ENCODE measurements at regions of chr7 and their contacts with region 1.

Region 1: DNA sequence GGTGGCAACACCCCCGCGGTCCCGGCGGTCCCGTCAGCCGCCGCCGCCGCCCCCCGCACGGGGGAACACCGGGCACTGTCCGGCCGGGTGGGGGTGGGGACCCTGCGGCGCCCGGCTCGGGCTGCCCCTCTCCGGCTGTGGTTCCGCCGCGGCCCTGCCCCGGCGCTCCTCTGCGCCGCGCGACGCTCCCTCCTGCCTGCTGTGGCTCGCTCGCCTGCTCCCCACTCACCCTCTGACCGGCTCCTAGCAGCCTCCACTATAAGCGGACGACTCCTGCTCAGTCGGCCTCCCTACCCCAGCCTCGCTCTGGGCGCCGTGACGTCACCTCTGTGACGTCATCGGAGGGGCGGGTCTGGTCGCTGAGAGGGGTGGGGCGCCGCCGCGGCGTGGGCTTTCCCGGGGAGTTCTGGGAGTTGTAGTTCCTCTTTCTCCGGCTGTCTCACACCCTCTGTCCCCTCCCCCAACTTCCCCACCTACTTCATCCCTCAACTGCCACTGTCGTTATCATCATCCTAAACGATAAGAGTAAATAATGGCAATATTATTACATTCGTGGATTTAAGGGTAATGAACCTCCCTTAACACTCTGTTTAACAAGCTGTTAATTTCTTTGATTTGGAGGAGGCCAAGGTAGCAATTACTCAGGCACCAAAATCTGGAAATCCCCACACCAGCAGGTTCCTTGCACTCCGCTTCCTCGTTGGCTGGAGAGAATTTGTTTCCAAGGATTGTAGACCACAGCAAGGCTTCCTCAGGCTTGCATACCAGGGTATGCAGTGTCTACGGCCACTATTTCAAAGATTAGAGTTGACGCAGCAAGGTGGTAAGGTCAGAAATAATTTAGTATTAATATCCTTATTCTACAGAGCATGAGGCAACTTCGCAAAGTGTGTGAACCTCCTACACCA is at the start of gene UBE2H:
- DNase-seq: peak; percentile 92
- H3K4me3 Mint-ChIP-seq: no peak within 1 kb of the TSS
- H3K27ac Mint-ChIP-seq: no peak within 1 kb of the TSS
- H3K4me1 Mint-ChIP-seq: peaks cover 9% of the 10 kb centered on the region
- H3K27me3 Mint-ChIP-seq: no peaks in the 10 kb centered on the region
- CTCF ChIP-seq: no peak
- total RNA-seq, gene UBE2H: 128 and 130 TPM in 2 replicates

Region 2: DNA sequence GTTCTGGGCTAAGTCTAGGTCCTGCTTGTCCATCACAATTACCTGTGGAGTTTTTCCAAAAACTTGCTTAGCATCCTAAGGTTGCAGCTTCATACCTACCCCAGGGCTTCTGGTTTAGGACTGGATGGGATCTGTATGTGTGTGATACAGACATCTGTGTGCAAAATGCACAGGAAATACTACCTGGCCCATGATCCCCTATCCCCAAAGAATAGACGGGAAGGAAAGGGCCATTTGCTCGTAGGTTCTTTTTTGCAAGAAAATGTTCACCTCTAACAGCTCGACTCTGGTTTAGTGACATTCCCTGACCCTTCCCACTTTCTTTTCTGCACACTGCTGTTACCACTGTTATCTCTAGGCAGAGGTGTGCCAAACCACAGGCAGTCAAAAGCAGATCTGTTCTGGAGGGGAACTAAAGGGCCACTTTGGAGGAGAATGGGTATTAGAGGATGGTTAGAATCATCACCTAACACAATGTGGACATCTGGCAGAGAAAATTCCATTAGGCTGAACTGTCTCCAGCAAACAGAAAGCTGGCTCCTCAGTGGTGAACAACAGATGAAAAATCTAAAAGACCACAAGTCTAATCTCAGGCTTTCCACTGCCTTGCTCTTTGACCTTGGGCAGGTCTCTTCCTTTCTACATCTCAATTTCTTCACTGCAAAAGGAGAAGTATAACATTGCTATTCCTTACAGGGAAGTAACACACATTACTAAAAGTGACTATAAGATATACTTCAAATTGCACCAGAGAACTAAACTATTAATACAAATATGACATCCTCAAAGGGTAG is 107.5 kb before region 1 on chr7:
- CTCF ChIA-PET with region 1: interaction called, 4 read pairs
- POLR2A ChIA-PET with region 1: interaction called, 21 read pairs
- intact Hi-C with region 1: loop called (anchors 5 kb)
- DNase-seq: no peak
- H3K4me3 Mint-ChIP-seq: no peak overlapping the region
- H3K27ac Mint-ChIP-seq: peak overlapping the region; percentile 95
- H3K4me1 Mint-ChIP-seq: peaks cover 47% of the 10 kb centered on the region
- H3K27me3 Mint-ChIP-seq: no peaks in the 10 kb centered on the region
- CTCF ChIP-seq: no peak

Region 3: DNA sequence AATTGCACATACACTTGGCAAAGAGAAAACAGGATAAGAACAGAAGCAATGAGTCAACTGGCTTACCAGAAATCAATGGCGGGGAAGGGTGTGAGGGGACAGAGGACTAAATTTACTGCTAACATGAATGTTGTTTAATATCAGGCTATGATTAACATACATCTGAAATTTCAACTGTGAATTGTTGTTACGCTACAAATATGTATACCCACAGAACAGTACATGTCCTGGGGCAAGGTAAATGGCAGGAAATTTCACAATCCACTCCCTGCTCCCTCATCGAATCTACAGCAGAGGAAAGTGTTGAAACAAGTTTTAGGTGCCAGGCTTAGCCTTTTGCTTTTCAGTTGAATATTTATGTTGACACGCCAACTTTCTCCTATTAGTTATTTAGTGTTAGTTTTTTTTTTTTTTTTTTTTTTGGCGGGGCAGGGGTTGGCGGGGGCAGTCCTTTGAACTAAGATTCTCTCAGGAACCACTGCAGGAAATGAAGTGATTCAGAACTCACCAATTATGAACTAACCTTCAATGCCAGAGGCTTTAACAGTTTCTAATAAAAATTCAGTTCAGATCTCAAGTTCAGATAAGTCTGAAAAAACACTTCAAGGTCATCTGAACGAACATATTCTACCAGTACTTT is 99.1 kb before region 1 on chr7:
- CTCF ChIA-PET with region 1: interaction called, 4 read pairs
- POLR2A ChIA-PET with region 1: interaction called, 39 read pairs
- intact Hi-C with region 1: loop called (anchors 5 kb)
- DNase-seq: peak; percentile 97
- H3K4me3 Mint-ChIP-seq: peak overlapping the region; percentile 54
- H3K27ac Mint-ChIP-seq: peak overlapping the region; percentile 92
- H3K4me1 Mint-ChIP-seq: peaks cover 52% of the 10 kb centered on the region
- H3K27me3 Mint-ChIP-seq: no peaks in the 10 kb centered on the region
- CTCF ChIP-seq: no peak

Region 4: GRCh38 chr7:129864042-129864441 is 88.9 kb before region 1 on chr7:
- CTCF ChIA-PET with region 1: no interaction called
- POLR2A ChIA-PET with region 1: interaction called, 10 read pairs
- intact Hi-C with region 1: no loop called
- DNase-seq: peak; percentile 76
- H3K4me3 Mint-ChIP-seq: no peak overlapping the region
- H3K27ac Mint-ChIP-seq: peak overlapping the region; percentile 82
- H3K4me1 Mint-ChIP-seq: peaks cover 21% of the 10 kb centered on the region
- H3K27me3 Mint-ChIP-seq: no peaks in the 10 kb centered on the region
- CTCF ChIP-seq: no peak

Region 5: GRCh38 chr7:129875745-129876411 is 77.0 kb before region 1 on chr7:
- CTCF ChIA-PET with region 1: interaction called, 5 read pairs
- POLR2A ChIA-PET with region 1: interaction called, 124 read pairs
- intact Hi-C with region 1: no loop called
- DNase-seq: peak; percentile 69
- H3K4me3 Mint-ChIP-seq: peak overlapping the region; percentile 69
- H3K27ac Mint-ChIP-seq: peak overlapping the region; percentile 90
- H3K4me1 Mint-ChIP-seq: peaks cover 35% of the 10 kb centered on the region
- H3K27me3 Mint-ChIP-seq: no peaks in the 10 kb centered on the region
- CTCF ChIP-seq: no peak

Region 6: GRCh38 chr7:129969807-129970446 is 17.0 kb after region 1 on chr7:
- CTCF ChIA-PET with region 1: interaction called, 6 read pairs
- POLR2A ChIA-PET with region 1: interaction called, 177 read pairs
- intact Hi-C with region 1: no loop called
- DNase-seq: peak; percentile 91
- H3K4me3 Mint-ChIP-seq: peak overlapping the region; percentile 46
- H3K27ac Mint-ChIP-seq: peak overlapping the region; percentile 88
- H3K4me1 Mint-ChIP-seq: peaks cover 33% of the 10 kb centered on the region
- H3K27me3 Mint-ChIP-seq: no peaks in the 10 kb centered on the region
- CTCF ChIP-seq: no peak

Region 7: DNA sequence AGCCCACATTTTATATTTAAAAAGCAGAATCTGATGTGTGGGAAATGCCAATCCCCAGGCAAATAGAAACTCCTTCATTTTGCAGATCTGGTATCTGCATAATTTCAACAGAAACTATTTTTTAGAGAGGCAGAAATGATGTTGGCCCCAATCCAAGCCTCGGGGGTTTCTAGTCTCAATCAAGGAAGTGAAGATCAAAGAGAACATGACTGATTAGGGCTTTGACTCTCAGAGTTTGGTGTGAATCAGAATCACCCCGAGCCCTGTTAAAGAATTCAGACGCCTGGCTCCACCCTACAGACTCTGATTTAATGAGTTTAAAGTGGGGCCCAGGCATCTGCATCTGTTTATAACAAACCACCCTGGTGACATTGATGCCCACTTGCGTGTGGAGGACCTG is 36.6 kb after region 1 on chr7:
- CTCF ChIA-PET with region 1: interaction called, 4 read pairs
- POLR2A ChIA-PET with region 1: interaction called, 9 read pairs
- intact Hi-C with region 1: loop called (anchors 1 kb)
- DNase-seq: peak; percentile 15
- H3K4me3 Mint-ChIP-seq: no peak overlapping the region
- H3K27ac Mint-ChIP-seq: no peak overlapping the region
- H3K4me1 Mint-ChIP-seq: no peaks in the 10 kb centered on the region
- H3K27me3 Mint-ChIP-seq: no peaks in the 10 kb centered on the region
- CTCF ChIP-seq: no peak